Tibial artery (tissue), 4 donors: ENCODE measurements at regions of chr7 and their contacts with region 1.

Region 1: DNA sequence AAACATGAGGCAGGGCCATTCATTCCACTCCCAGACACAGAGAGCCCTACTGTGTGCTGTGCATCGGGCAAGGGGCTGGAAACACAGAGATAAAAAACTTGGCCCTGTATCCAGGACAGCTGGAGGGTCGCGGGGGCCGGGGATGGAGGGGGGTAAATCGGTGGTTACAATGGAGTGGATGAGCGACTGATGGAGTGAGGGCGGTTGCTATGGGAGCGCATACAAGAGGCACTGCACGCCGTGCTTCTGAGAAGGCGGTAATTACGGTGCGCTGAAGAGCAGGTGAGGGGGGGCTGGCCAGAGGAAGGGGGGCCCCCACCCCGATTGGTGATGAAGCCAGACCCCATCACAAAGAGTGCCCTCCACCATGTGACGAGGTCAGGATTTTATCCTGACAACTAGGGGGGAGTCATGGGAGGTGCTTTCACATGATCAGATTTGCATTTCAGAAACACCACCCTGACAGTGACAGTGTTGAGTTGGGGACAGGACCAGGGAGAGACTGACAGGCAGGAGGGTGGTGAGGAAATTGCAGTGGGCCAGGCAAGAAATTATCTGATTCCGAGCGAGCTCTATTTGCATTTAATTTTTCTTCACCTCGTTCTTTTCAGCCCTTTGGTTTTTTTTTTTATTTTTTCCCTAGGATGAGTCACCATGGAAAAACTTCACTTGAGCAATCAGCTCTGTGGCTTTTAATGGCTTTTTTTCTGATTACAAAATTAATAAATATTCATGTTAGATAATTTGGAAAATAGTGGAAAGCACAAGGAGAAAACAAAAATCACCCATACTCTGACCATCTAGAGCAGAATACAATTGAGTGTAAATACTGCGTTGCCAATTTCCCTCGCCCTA is 7.8 kb downstream of the CPA5 start:
- DNase-seq: no peak
- H3K4me3 ChIP-seq: no peak overlapping the region
- H3K27ac ChIP-seq: peak overlapping the region; percentile 54 to 67
- H3K4me1 ChIP-seq: peaks cover 0 to 55% (median 38%) of the 10 kb centered on the region in 4 donors
- H3K27me3 ChIP-seq: no peaks in the 10 kb centered on the region
- CTCF ChIP-seq: no peak

Region 2: GRCh38 chr7:130201796-130202195 is 150.7 kb before region 1 on chr7:
- intact Hi-C with region 1: loop called (anchors 5 kb)
- DNase-seq: no peak
- H3K4me3 ChIP-seq: no peak overlapping the region
- H3K27ac ChIP-seq: no peak overlapping the region
- H3K4me1 ChIP-seq: peaks cover 0 to 7% (median 2%) of the 10 kb centered on the region in 4 donors
- H3K27me3 ChIP-seq: no peaks in the 10 kb centered on the region
- CTCF ChIP-seq: no peak